Heart left ventricle (tissue), 16 donors: ENCODE measurements at regions of chr4 and their contacts with region 1.

Region 1: DNA sequence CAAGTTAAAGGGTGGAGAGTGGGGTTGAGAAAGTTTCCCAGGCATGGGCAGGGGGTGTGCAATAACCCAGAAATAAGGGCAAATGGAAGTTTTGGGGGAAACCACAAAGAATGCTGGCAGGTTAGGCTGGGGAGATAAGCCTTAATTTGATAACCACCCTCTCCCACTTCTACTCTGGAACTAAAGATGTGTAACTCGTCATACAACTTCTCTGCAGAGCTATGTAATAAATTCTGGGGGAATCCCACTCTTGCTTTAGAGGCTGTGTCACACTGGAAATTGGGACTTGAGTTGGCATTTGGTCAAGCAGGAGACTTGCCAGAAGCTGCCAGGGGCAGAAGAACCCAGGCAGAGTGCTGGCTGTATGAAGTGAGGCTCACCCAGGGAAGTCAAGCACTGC is 170.9 kb upstream of the CPEB2 start:
- DNase-seq: no peak
- ATAC-seq: no peak
- H3K4me3 ChIP-seq: no peak overlapping the region
- H3K27ac ChIP-seq: no peak overlapping the region
- H3K4me1 ChIP-seq: no peaks in the 10 kb centered on the region
- H3K27me3 ChIP-seq: no peaks in the 10 kb centered on the region
- CTCF ChIP-seq: no peak
- POLR2A ChIP-seq: no peak

Region 2: GRCh38 chr4:14596904-14597303 is 234.5 kb before region 1 on chr4:
- intact Hi-C with region 1: no loop called
- DNase-seq: no peak
- ATAC-seq: no peak
- H3K4me3 ChIP-seq: no peak overlapping the region
- H3K27ac ChIP-seq: no peak overlapping the region
- H3K4me1 ChIP-seq: peaks cover 0 to 8% (median 0%) of the 10 kb centered on the region in 12 donors
- H3K27me3 ChIP-seq: no peaks in the 10 kb centered on the region
- CTCF ChIP-seq: peak in 4 of 12 donors; percentile 3 to 21 (median 9)
- POLR2A ChIP-seq: no peak

Region 3: DNA sequence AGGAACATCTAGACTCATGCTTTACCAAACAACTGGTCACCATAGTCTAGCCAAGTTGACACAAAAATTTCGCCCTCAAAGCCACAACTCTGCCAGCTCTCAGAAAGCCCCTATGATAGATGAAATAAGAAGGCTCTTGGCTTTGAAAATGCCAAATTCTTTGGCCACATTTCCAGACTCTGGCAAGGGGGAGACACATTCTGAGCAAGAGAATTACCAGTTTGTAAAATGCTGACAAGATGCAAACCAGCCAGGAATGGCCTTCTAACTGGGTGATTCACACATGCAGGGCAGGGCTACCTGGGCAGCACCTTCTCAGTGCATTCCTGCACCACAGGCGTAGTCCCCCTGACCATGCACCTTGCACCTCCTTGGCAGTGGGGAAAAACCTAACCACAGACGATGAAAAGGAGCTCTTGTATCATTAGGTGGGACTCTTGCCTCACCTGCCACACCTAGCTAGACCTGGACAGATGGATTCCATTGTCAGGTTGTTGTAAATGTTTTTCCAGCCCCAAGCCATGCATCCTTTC is 93.5 kb after region 1 on chr4:
- intact Hi-C with region 1: loop called in 1 of 10 experiments (anchors 5 kb)
- DNase-seq: no peak
- ATAC-seq: no peak
- H3K4me3 ChIP-seq: no peak overlapping the region
- H3K27ac ChIP-seq: no peak overlapping the region
- H3K4me1 ChIP-seq: peaks cover 0 to 4% (median 0%) of the 10 kb centered on the region in 12 donors
- H3K27me3 ChIP-seq: no peaks in the 10 kb centered on the region
- CTCF ChIP-seq: no peak
- POLR2A ChIP-seq: no peak